Heart right ventricle (tissue), 16 donors: ENCODE measurements at regions of chrX and their contacts with region 1.

Region 1: DNA sequence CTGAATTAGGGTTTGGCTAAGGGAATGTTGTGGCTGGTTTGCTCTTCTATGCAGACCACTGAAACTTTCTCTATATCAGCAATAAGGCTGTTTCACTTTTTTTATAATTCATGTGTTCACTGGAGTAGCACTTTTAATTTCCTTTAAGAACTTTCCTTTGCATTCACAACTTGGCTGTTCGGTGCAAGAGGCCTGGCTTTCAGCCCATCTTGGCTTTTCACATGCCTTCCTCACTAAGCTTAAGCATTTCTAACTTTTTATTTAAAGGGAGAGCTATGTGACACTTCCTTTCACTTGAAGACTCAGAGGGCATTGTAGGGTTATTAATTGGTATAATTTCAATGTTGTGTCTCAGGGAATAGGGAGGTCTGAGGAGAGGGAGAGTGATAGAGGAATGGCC is 142.3 kb downstream of the SHROOM4 start:
- DNase-seq: no peak
- ATAC-seq: no peak
- H3K4me3 ChIP-seq: no peak overlapping the region
- H3K27ac ChIP-seq: no peak overlapping the region
- H3K4me1 ChIP-seq: peaks cover 0 to 19% (median 0%) of the 10 kb centered on the region in 9 donors
- H3K27me3 ChIP-seq: peaks cover 0 to 68% (median 0%) of the 10 kb centered on the region in 7 donors
- CTCF ChIP-seq: no peak

Region 2: DNA sequence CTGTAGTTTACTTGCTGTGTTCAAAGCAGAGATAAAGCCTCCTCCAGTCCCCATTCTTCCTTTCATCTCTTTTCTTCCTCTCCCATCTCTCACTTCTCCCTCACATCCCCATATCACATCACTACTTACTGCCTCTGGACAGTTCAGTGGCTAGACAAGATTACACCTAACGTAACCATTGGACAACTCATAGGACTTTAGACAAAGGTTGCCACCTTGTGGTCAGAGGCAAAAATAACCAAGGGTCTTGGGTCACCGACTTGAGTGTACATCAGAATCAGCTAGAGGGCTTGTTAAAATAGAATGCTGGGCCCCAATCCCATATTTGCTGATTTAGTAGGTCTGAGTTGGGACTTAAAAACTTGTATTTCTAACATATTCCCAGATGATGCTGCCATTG is 91.7 kb before region 1 on chrX:
- intact Hi-C with region 1: loop called in 2 of 10 experiments (anchors 10 kb)
- DNase-seq: peak in 1 of 2 donors; percentile 18
- ATAC-seq: peak in 1 of 8 donors; percentile 60
- H3K4me3 ChIP-seq: no peak overlapping the region
- H3K27ac ChIP-seq: no peak overlapping the region
- H3K4me1 ChIP-seq: no peaks in the 10 kb centered on the region
- H3K27me3 ChIP-seq: peaks cover 0 to 44% (median 0%) of the 10 kb centered on the region in 7 donors
- CTCF ChIP-seq: peak in 8 of 9 donors; percentile 21 to 64 (median 56)

Region 3: DNA sequence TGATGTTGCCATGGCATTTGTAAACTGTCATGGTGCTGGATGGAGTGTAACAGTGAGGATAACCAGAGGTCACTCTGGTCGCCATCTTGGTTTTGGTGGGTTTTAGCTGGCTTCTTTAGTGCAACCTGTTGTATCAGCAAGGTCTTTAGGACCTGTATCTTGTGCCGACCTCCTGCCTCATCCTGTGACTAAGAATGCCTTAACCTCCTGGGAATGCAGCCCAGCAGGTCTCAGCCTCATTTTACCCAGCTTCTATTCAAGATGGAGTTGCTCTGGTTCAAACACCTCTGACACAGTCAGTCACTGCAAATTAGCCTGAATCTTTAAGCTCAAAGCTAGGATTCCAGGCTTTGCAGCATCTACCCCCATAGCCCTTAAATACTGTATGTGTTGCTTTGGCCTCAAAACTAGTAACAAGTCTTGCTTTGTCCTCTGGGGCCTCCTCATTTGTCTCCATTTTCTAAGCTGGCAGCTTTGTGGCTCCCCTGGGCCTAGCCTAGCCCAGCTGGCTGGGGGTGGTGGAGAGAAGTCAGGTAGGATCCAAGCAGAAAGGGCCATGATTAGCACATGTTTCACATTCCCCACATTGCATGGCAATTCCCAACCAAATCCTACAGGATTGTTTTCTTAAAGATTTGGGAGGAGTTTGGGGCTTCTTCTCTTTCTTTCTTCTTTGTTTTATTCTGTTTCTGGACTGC is 49.9 kb after region 1 on chrX:
- intact Hi-C with region 1: no loop called
- DNase-seq: no peak
- ATAC-seq: no peak
- H3K4me3 ChIP-seq: no peak overlapping the region
- H3K27ac ChIP-seq: no peak overlapping the region
- H3K4me1 ChIP-seq: no peaks in the 10 kb centered on the region
- H3K27me3 ChIP-seq: peaks cover 0 to 9% (median 0%) of the 10 kb centered on the region in 7 donors
- CTCF ChIP-seq: no peak